Activated CD4-positive, alpha-beta memory T cell treated with anti-CD3 and anti-CD28 coated beads for 36 hours (primary cell): ENCODE measurements at regions of chr17 and their contacts with region 1.

Region 1: GRCh38 chr17:37358830-37359681 is 16.7 kb upstream of the C17orf78 start:
- DNase-seq: peak; percentile 96
- H3K4me3 Mint-ChIP-seq: peak overlapping the region; percentile 95
- H3K27ac Mint-ChIP-seq: peak overlapping the region; percentile 82
- H3K4me1 Mint-ChIP-seq: peaks cover 23% of the 10 kb centered on the region
- H3K27me3 Mint-ChIP-seq: no peaks in the 10 kb centered on the region

Region 2: DNA sequence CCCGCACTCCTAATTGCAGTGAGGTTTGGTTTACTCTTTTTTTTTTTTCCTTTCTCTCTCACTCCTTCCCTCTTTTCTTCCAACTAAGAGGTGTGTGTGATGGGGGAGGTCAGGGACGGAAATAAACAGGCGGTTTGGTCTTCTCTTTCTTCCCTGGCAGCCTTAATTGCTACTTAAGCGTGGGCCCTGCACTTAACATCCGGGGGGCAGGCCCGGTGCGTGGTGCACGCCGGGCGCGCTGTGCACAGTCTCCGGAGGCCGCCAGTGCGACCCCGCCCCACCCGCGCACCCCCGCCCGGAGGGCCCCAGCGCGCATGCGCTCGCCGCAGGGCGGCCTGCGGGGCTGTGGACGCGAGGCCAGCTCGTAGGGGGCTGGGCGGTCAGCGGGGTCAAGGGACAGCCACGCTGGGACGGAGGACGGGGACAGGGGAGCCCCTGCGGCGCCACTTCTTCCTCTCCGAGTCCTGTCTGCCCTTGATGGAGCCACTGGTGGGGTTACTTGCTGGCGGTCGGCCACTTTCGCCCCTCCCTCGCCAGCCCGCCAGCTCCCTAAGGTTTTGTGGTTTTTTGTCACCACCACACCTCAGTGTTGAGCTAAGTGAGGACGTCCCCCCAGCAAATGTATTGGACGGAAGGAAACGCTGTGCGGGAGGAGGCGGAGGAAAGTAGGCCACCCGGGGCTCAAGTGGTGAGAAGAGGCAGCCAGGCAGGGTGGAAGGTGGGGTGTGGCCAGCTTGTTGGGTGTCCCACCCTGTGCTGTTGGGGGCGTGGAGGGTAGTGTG is 636.7 kb before region 1 on chr17:
- CTCF ChIA-PET with region 1: no interaction called
- POLR2A ChIA-PET with region 1: no interaction called
- intact Hi-C with region 1: loop called (anchors 5 kb)
- DNase-seq: peak; percentile 90
- H3K4me3 Mint-ChIP-seq: peak overlapping the region; percentile 78
- H3K27ac Mint-ChIP-seq: peak overlapping the region; percentile 97
- H3K4me1 Mint-ChIP-seq: peaks cover 42% of the 10 kb centered on the region
- H3K27me3 Mint-ChIP-seq: no peaks in the 10 kb centered on the region

Region 3: DNA sequence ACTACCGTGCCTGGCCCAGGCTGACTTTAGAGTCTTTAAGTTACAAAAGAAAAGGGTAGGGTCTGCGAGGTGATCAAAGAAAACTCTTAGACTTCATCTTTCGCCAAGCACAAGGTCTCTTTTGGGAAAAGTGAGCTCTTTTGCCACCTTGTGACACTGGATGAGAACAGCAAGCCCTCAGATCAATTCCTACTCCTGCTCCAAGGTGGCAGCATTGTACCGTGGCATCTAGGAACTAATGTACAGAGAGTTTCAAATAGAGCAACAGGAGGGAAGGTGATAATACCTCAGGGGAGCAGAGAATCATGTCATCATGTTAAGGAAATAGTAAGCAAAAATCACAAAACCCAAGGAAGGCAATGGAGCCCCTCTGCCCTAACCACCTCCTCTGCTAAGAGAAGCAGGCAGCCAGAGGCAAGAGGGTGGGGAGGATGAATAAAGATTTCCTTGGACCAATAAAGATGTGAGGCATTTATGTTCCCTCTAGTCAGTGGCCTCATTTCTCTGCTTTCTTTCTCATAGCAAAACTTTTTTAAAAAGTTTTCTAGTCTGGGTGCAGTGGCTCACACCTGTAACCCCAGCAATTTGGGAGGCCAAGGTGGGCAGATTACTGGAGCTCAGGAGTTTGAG is 14.6 kb after region 1 on chr17:
- CTCF ChIA-PET with region 1: interaction called, 40 read pairs
- POLR2A ChIA-PET with region 1: interaction called, 4 read pairs
- intact Hi-C with region 1: no loop called
- DNase-seq: peak; percentile 83
- H3K4me3 Mint-ChIP-seq: no peak overlapping the region
- H3K27ac Mint-ChIP-seq: no peak overlapping the region
- H3K4me1 Mint-ChIP-seq: peaks cover 6% of the 10 kb centered on the region
- H3K27me3 Mint-ChIP-seq: no peaks in the 10 kb centered on the region

Region 4: GRCh38 chr17:37406635-37407461 is 47.8 kb after region 1 on chr17 and contains the starts of genes ACACA and TADA2A:
- CTCF ChIA-PET with region 1: interaction called, 3 read pairs
- POLR2A ChIA-PET with region 1: interaction called, 3 read pairs
- intact Hi-C with region 1: loop called (anchors 1 kb)
- DNase-seq: peak; percentile 86
- H3K4me3 Mint-ChIP-seq: peak within 1 kb of the TSS; percentile 99
- H3K27ac Mint-ChIP-seq: peak within 1 kb of the TSS; percentile 97
- H3K4me1 Mint-ChIP-seq: peaks cover 55% of the 10 kb centered on the region
- H3K27me3 Mint-ChIP-seq: no peaks in the 10 kb centered on the region
- total RNA-seq, gene ACACA: 58.2 to 64.4 TPM
- total RNA-seq, gene TADA2A: 35.8 to 36.5 TPM

Region 5: DNA sequence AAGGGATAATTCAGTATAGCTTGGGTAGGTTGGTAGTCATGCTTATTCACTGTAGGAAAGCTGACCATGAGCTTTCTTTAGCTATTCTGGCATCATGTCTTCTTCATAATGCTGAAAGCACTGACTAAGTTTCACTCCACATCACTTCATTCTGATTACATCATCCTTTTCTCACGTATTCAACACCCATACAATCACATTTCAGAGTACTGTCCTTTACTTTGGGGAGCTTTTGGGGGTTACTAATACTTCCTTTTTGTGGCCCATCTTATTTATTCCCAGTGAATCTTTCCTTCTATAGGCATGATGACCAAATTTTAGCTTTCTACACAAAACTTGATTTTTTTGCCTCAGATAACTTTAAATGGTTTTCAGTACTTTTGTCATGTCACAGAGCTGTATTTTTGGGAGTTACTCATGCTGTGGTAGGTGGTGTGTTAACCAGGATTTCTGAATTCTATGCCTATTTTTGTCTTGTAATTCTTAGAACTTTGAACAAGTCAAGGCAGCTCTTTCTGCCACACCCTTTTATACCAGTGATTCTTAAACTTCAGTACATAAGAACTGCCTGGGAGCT is 71.1 kb after region 1 on chr17:
- CTCF ChIA-PET with region 1: interaction called, 3 read pairs
- POLR2A ChIA-PET with region 1: interaction called, 10 read pairs
- intact Hi-C with region 1: no loop called
- DNase-seq: no peak
- H3K4me3 Mint-ChIP-seq: peak overlapping the region; percentile 54
- H3K27ac Mint-ChIP-seq: peak overlapping the region; percentile 97
- H3K4me1 Mint-ChIP-seq: peaks cover 32% of the 10 kb centered on the region
- H3K27me3 Mint-ChIP-seq: no peaks in the 10 kb centered on the region

Region 6: GRCh38 chr17:37489197-37490001 is 130.3 kb after region 1 on chr17 and contains the start of gene DUSP14:
- CTCF ChIA-PET with region 1: no interaction called
- POLR2A ChIA-PET with region 1: interaction called, 5 read pairs
- intact Hi-C with region 1: loop called (anchors 1 kb)
- DNase-seq: peak; percentile 84
- H3K4me3 Mint-ChIP-seq: peak within 1 kb of the TSS; percentile 90
- H3K27ac Mint-ChIP-seq: peak within 1 kb of the TSS; percentile 88
- H3K4me1 Mint-ChIP-seq: peaks cover 47% of the 10 kb centered on the region
- H3K27me3 Mint-ChIP-seq: no peaks in the 10 kb centered on the region
- total RNA-seq, gene DUSP14: 17.4 to 19.0 TPM